ENCODE measurements at regions of chr2 and their contacts with region 1.

Region 1: GRCh38 chr2:120675460-120676130 is 60.1 kb upstream of the GLI2 start:
- DNase-seq: peak; percentile 54
- H3K4me3 ChIP-seq: no peak overlapping the region
- H3K27ac ChIP-seq: no peak overlapping the region
- H3K4me1 ChIP-seq: peaks cover 4% of the 10 kb centered on the region
- H3K27me3 ChIP-seq: peaks cover 83% of the 10 kb centered on the region
- CTCF ChIP-seq: peak; percentile 76

Region 2: GRCh38 chr2:120167272-120167671 is 508.3 kb before region 1 on chr2:
- intact Hi-C with region 1: no loop called
- DNase-seq: no peak
- H3K4me3 ChIP-seq: no peak overlapping the region
- H3K27ac ChIP-seq: no peak overlapping the region
- H3K4me1 ChIP-seq: no peaks in the 10 kb centered on the region
- H3K27me3 ChIP-seq: no peaks in the 10 kb centered on the region
- CTCF ChIP-seq: no peak

Region 3: GRCh38 chr2:120330946-120331822 is 344.4 kb before region 1 on chr2:
- intact Hi-C with region 1: loop called (anchors 5 kb)
- DNase-seq: no peak
- H3K4me3 ChIP-seq: no peak overlapping the region
- H3K27ac ChIP-seq: no peak overlapping the region
- H3K4me1 ChIP-seq: no peaks in the 10 kb centered on the region
- H3K27me3 ChIP-seq: peaks cover 43% of the 10 kb centered on the region
- CTCF ChIP-seq: no peak

Measured in left ventricle myocardium inferior (tissue), 1 donor.